GM10248 (cell line): ENCODE measurements at regions of chr10 and their contacts with region 1.

Region 1: DNA sequence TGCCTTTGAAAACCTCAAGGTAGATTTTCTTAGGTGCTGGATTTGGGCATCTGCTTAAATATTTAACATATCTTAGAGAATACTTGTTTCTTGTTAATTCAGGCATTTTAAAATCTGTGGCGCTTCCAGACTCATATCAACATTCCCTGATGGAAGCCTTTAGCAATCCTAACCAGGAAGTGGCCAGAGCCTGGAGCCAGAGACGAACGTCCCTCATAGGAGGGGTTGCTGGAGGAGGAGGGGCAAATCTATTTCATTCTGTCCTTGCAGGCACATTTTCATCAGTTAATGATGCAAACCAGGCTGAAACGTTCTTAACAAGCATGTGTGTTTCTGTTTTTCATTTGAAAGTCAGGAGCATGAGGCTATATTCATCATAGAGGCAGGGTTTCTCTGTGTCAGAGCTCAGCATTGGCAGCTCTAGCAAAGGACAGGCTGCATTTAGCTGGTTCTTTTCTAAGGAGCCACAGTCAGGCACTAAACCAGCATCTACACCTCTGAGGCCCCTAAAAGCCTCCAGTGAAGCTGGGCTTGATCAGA is 17.8 kb upstream of the IFIT2 start:
- DNase-seq: no peak
- CTCF ChIP-seq: no peak

Region 2: GRCh38 chr10:89266721-89267453 is 17.1 kb before region 1 on chr10:
- CTCF ChIA-PET with region 1: interaction called, 11 read pairs
- POLR2A ChIA-PET with region 1: no interaction called
- DNase-seq: no peak
- CTCF ChIP-seq: no peak